ENCODE measurements at regions of chr10 and their contacts with region 1.

Region 1: DNA sequence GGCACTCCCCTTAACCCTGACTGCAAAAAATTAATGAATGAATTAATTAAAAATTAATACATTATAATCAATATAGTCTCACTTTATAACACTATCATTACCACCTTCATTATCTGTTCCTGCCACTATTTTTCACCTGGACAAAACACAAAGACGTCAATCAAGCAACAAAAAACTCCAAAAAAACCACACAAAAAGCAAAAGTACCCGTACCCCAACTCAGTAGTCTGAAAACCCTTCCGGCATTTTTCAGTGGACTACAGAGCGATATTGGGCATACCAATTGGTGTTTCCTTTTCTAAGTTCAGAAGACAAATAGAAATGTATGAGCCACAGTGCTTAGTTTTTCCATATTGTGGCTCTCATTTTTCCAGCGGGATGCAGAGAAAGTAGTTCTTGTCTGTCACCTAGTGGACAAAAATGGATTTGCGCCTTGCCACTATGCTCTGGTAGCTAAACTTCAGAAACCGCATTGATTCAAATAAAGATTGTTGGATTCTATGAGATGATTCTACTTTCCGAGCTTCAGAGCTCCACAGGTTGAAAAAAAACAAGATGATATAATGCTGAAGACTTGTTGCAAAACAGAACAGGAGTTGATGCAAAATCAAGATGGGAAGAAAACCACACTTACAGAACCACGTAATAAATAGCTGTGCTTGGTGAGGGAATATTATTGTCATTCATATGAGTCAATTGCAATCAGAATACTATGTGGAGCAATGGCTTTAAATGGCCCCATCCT is 50.6 kb upstream of the ITGB1 start:
- DNase-seq: peak; percentile 52
- ATAC-seq: no peak; the same call in 1 of the 2 replicates
- H3K4me3 Mint-ChIP-seq: peak overlapping the region; percentile 33; the same call in 1 of the 2 replicates
- H3K27ac Mint-ChIP-seq: peak overlapping the region; percentile 22; the same call in 1 of the 2 replicates
- H3K4me1 Mint-ChIP-seq: peaks cover 35% of the 10 kb centered on the region
- H3K27me3 Mint-ChIP-seq: no peaks in the 10 kb centered on the region
- CTCF ChIP-seq: peak; percentile 93

Region 2: GRCh38 chr10:32943854-32944661 is 64.6 kb before region 1 on chr10:
- CTCF ChIA-PET with region 1: interaction called, 11 read pairs
- POLR2A ChIA-PET with region 1: no interaction called
- DNase-seq: peak; percentile 32
- ATAC-seq: peak; percentile 86
- H3K4me3 Mint-ChIP-seq: no peak overlapping the region
- H3K27ac Mint-ChIP-seq: peak overlapping the region; percentile 80
- H3K4me1 Mint-ChIP-seq: peaks cover 80% of the 10 kb centered on the region
- H3K27me3 Mint-ChIP-seq: no peaks in the 10 kb centered on the region
- CTCF ChIP-seq: no peak

Region 3: DNA sequence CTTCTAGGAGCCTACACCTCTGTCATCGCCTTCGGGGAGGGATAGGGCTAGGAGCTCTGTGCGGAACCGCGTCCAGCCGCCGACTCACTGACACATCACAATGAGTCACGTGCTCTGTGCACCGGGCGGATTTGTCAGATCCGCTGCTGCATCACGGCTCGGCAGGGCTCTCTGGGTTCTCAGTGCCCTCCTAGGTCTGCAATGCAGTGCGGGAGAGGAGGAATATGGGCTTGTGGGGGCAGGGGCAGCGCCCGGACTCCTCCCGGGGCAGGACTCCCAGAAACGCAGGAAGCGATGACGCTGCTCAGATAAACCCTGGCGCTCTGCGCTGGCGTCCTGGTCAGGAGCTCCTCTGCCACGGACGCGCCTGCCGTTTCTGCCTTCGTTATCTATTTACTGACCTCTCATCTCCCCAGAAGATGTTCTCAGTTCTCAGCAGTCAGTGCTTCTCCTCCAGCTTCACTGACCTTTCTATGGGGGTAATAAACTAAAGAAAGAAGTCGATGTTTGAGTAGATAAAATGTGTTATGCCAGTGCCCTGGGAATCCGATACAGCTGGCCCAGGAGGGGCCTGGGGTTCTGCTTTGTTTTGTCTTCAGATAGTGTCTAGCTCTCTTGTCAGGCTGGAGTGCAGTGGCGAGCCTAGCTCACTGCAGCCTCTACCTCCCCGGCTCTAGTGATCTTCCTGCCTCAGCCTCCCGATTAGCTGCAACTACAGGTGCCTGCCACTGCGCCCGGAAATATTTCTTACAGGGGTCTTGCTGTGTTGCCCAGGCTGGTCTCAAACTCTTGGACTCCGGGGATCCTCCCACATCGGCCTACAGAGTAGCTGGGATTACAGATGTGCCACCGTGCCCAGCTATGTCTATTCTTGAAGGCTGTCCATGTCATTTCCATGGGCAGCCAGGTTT is 27.9 kb before region 1 on chr10:
- CTCF ChIA-PET with region 1: interaction called, 31 read pairs
- POLR2A ChIA-PET with region 1: interaction called, 4 read pairs
- DNase-seq: peak; percentile 76
- ATAC-seq: peak; percentile 95
- H3K4me3 Mint-ChIP-seq: peak overlapping the region; percentile 83
- H3K27ac Mint-ChIP-seq: peak overlapping the region; percentile 97
- H3K4me1 Mint-ChIP-seq: peaks cover 51% of the 10 kb centered on the region
- H3K27me3 Mint-ChIP-seq: no peaks in the 10 kb centered on the region
- CTCF ChIP-seq: no peak

Region 4: DNA sequence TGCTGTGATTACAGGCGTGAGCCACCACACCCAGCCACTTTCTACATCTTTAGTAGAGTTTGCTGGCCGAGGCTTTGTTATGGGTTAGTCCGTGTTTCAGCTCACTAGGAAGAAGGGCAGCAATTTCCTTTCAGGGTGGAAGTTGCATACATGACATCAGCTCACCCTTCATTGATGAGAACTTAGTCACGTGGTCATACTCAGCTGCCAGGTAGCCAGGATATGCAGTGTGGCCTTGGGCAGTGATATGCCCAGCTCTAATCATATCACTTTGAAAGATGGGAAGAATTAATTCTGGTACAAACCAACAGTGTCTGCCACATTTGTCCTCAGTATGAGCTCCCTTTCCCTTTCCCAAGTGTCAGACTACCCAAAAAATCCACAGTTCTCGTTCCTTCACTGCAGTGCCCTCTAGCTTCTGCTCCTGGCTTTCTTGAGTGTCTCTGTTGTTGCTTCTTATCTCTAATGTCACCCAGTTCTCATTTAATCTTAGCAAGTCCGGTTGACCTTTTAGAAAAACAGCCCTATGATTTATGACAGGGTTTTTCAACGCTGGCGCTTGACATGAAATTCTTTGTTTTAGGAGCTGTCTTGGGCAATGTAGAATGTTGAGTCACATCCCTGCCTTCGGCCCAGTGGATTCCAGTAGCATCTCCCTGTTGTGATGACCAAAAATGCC is 58.0 kb after region 1 on chr10:
- CTCF ChIA-PET with region 1: interaction called, 36 read pairs
- POLR2A ChIA-PET with region 1: no interaction called
- DNase-seq: no peak
- ATAC-seq: peak; percentile 74
- H3K4me3 Mint-ChIP-seq: no peak overlapping the region
- H3K27ac Mint-ChIP-seq: no peak overlapping the region
- H3K4me1 Mint-ChIP-seq: peaks cover 8% of the 10 kb centered on the region
- H3K27me3 Mint-ChIP-seq: no peaks in the 10 kb centered on the region
- CTCF ChIP-seq: no peak

Region 5: GRCh38 chr10:33082373-33082895 is 73.8 kb after region 1 on chr10:
- CTCF ChIA-PET with region 1: no interaction called
- POLR2A ChIA-PET with region 1: no interaction called
- DNase-seq: no peak
- ATAC-seq: no peak
- H3K4me3 Mint-ChIP-seq: no peak overlapping the region
- H3K27ac Mint-ChIP-seq: no peak overlapping the region
- H3K4me1 Mint-ChIP-seq: peaks cover 23% of the 10 kb centered on the region
- H3K27me3 Mint-ChIP-seq: no peaks in the 10 kb centered on the region; the same call in 1 of the 2 replicates
- CTCF ChIP-seq: no peak

Region 6: DNA sequence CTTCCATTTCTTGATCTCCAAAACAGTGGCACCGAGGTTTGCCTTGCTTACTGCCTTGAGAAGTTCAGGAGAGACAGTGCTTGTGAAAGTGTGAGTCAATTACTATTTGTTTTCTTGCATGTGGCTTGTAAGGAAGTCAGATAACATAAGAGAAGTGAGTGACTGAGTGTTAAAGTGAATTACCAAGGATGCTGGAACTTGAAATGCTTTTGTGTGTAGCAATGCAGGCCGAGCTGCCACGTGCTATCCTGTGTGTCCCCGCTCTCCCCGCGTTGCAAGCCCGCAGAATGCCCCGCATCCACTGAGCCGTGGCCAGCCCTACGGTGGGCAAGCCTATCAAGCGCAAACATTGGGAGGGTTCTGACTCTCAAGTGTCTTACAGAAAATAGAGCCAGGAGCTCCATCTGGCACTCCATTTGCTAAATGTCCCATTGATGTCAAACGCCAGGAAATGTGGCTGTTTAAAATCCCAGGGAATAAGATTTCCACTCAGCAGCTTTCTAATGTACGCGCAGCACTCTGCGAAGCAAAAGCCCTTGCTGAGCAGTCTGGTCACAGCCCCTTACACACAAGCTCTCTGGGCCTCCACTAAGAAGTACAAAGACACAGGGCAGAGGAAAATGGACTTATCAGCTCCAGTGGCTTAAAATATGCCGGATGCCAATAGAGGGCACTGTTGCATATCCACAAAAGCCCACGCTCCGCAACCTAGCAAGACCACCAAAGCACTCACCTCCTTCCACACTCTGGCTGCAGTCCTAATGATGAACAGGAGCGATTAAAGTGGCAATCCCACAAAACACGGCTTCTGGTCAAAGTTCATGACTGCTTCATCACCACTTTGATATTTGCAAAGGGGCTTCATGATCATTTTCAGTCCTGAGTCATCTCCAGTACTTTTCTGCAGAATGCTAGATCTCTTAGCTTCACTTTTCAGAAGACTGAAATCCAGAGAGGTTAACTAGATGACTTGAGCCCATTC is 107.4 kb after region 1 on chr10:
- CTCF ChIA-PET with region 1: interaction called, 17 read pairs
- POLR2A ChIA-PET with region 1: no interaction called
- DNase-seq: peak; percentile 54
- ATAC-seq: peak; percentile 84
- H3K4me3 Mint-ChIP-seq: no peak overlapping the region
- H3K27ac Mint-ChIP-seq: no peak overlapping the region
- H3K4me1 Mint-ChIP-seq: peaks cover 15% of the 10 kb centered on the region
- H3K27me3 Mint-ChIP-seq: no peaks in the 10 kb centered on the region
- CTCF ChIP-seq: peak; percentile 38; the same call in 1 of the 2 replicates

Region 7: GRCh38 chr10:33174674-33175434 is 166.2 kb after region 1 on chr10:
- CTCF ChIA-PET with region 1: no interaction called
- POLR2A ChIA-PET with region 1: no interaction called
- DNase-seq: no peak
- ATAC-seq: no peak
- H3K4me3 Mint-ChIP-seq: no peak overlapping the region
- H3K27ac Mint-ChIP-seq: no peak overlapping the region
- H3K4me1 Mint-ChIP-seq: peaks cover 22% of the 10 kb centered on the region
- H3K27me3 Mint-ChIP-seq: no peaks in the 10 kb centered on the region
- CTCF ChIP-seq: no peak

Region 8: GRCh38 chr10:33248638-33249037 is 240.0 kb after region 1 on chr10:
- CTCF ChIA-PET with region 1: no interaction called
- POLR2A ChIA-PET with region 1: no interaction called
- DNase-seq: no peak
- ATAC-seq: no peak
- H3K4me3 Mint-ChIP-seq: no peak overlapping the region
- H3K27ac Mint-ChIP-seq: no peak overlapping the region
- H3K4me1 Mint-ChIP-seq: peaks cover 12% of the 10 kb centered on the region
- H3K27me3 Mint-ChIP-seq: no peaks in the 10 kb centered on the region
- CTCF ChIP-seq: no peak